Activated naive CD4-positive, alpha-beta T cell treated with anti-CD3 and anti-CD28 coated beads for 36 hours (primary cell): ENCODE measurements at regions of chr22 and their contacts with region 1.

Region 1: DNA sequence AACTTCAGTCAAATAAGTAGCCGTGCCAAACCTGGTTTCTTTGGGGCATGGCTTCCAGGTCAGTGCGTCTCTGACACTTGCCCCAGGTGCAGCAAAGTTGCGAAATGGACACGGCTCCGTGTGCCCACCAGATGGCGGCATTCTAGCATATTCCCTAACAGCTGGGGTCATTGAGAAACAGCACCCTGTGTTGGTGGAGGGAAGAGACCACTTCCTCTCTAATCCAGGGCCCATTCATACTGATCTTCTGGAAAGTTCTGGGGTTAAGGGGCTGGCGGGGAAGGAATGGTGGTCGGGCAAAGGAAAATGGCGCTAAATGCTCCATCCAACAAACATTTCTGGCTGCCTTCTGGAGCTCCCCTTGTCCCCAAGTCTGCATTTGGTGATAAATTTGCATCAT is 141.2 kb upstream of the TIMP3 start:
- DNase-seq: peak; percentile 78
- H3K4me3 Mint-ChIP-seq: no peak overlapping the region
- H3K27ac Mint-ChIP-seq: no peak overlapping the region
- H3K4me1 Mint-ChIP-seq: no peaks in the 10 kb centered on the region
- H3K27me3 Mint-ChIP-seq: no peaks in the 10 kb centered on the region

Region 2: DNA sequence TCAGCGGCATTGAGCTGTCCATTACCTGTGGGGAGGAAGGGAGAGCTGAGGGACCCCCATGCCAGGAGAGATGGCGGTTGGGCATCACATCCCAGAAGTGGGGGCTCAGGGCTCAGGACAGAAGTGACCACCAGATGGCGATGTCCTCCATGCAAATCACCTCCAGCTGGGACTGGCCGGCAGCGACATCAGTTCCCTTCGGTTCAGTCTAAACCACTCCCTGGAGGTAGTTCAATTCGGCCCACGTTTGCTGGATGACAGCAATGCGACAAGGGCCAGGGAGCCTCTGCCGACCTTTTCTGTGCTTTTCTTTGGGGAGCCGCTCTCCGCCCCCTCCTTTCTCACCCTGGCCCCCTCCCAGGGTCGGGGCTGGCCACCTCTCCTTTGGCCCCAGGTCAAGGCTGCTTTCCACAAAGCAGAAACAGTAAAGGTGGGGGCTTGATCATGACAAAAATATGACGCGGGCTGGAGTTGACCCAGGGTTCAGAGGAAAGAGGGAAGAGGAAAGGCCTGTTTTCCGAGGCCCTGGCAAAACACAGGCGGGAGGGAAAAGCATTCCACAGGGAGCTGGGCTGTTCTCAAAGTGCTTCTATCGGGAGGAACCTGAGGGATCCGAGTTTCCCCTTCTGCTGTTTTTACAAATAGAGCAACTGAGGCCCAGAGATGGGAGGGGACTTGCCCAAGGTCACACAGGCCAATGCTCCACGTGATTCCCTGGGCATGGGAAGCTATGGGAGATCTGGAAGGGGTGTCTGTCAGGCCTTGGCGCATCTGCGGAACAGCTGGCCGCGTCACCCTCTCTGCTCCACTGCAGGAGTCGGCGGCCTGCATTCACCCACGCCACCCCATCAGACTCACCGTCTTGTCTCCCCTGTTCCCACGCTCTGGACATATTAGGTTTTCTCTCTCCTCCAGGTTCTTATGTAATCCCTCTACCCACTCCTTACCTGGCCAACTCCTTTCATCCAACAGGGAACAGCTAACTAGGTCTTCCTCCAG is 131.0 kb before region 1 on chr22:
- CTCF ChIA-PET with region 1: interaction called, 7 read pairs
- intact Hi-C with region 1: loop called (anchors 5 kb)
- DNase-seq: peak; percentile 83
- H3K4me3 Mint-ChIP-seq: no peak overlapping the region
- H3K27ac Mint-ChIP-seq: no peak overlapping the region
- H3K4me1 Mint-ChIP-seq: no peaks in the 10 kb centered on the region
- H3K27me3 Mint-ChIP-seq: no peaks in the 10 kb centered on the region

Region 3: DNA sequence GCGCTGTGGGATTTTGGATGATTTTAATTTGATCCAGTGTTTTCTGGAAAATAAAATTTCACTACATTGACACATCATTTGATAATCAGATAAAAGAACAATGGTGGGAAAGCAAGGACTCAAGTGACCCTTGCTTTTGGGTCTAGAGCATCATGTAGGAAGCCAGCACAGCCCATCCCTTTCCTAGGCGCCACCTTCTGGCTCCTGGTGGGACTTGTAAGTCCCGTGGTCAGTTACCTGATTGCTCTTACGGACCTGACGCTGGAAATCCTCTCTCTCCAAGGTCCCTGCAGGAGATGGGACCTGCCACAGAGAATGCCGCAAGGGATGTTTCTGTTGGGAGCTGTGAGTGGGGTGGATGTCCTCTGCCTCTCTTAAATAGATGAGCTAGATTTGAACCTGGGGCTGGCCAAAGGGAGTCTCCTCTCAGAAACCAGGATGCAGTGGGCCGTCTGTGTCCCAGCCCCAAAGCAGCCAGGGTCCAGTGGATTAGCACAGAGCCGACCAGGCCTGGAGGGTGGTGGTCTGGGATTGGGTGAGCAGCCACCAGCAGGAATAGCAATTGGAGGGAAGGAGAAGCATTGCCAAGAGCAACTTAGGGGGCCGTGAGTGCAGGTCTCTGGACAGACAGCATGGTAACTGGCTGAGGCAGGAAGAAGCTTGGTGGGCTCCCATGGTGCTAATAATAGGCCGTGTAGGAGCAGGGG is 162.9 kb after region 1 on chr22:
- CTCF ChIA-PET with region 1: interaction called, 3 read pairs
- intact Hi-C with region 1: loop called (anchors 1 kb)
- DNase-seq: peak; percentile 37
- H3K4me3 Mint-ChIP-seq: no peak overlapping the region
- H3K27ac Mint-ChIP-seq: no peak overlapping the region
- H3K4me1 Mint-ChIP-seq: no peaks in the 10 kb centered on the region
- H3K27me3 Mint-ChIP-seq: no peaks in the 10 kb centered on the region

Region 4: DNA sequence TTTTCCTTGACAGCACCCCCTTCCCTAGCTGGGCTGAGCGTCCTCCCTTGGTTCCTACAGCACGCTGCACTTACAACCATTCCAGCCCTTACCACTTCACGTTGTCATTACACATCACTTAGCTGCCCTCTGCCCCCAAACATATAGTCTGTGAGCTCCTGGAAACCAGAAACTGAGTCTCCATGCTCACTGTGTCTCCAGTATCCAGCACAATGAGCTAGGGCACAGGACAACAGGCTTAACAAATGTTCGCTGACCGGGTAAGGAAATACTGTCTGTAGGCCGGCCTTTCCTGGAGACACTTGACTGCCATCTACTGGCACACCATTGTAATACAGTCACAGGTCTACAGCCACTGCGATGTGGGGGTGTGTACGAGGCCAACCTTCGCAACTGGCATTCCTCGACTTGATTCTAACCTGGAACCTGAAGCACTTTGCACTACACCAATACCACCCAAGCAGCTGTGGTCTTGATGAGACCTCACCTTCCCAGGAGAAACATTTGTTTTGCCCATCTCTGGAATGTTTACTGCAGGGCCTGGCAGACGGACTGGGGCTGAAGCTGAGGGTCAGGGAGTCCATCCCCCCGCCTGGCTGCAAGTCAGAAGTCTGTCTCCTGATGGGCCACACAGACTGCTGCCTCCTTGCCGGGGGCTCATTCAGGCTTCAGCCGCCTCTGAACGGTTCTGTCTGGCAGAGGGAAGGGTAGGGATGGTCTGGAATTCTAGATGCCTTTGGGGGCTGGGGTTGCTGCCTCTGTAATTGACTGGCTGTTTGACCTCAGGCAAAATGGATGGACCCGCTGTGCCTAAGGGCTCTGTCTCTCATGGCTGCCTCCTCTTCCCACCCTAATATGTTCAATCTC is 325.8 kb after region 1 on chr22:
- CTCF ChIA-PET with region 1: interaction called, 3 read pairs
- intact Hi-C with region 1: loop called (anchors 1 kb)
- DNase-seq: peak; percentile 70
- H3K4me3 Mint-ChIP-seq: no peak overlapping the region
- H3K27ac Mint-ChIP-seq: no peak overlapping the region
- H3K4me1 Mint-ChIP-seq: no peaks in the 10 kb centered on the region
- H3K27me3 Mint-ChIP-seq: no peaks in the 10 kb centered on the region

Region 5: DNA sequence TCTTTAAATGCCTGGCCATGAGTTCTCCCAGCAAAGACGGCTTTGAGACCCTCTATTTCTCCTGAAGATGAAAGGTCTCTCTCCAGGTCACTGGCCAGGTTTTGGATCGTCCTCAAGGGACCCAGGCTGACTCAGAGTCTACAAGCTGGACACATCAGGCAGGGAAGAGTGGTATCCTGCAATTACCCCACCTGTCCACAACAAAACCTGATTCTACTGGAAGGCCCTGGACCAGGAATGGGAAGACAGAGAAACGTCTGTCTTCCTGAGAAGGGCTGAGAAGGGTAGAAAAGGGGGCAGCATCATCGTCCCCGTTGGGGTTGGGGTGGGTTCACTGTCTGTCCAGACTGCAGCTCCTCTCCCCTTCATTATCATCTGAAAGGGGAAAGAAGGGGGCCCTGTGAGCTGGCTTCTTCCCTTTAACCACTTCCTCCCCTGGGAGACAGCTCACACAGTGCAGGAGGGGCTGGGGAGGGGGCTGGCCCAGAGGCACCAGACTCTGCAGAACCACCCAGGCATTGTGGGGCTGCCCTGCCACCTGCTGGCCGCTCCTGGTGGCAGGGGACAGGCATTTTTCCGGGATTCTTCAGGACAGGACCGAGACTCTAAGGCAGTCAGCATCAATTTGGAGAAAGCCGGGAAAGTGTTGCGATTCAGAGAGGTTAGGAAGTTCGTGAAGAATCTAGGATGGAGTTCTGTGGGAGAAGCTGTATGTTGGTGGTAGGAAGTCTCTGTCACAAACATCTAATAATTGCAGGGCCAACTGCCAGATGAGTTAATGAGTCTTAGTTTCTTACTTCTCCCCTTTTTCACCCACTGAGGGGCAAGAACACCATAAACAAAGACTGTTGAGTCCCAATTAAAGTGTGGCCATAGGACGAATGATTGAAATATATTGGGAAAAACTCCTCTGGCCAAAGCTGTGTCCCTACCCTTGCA is 340.3 kb after region 1 on chr22:
- CTCF ChIA-PET with region 1: no interaction called
- intact Hi-C with region 1: loop called (anchors 5 kb)
- DNase-seq: peak; percentile 44
- H3K4me3 Mint-ChIP-seq: no peak overlapping the region
- H3K27ac Mint-ChIP-seq: no peak overlapping the region
- H3K4me1 Mint-ChIP-seq: no peaks in the 10 kb centered on the region
- H3K27me3 Mint-ChIP-seq: peaks cover 10% of the 10 kb centered on the region